ENCODE measurements at regions of chr12 and their contacts with region 1.

Region 1: DNA sequence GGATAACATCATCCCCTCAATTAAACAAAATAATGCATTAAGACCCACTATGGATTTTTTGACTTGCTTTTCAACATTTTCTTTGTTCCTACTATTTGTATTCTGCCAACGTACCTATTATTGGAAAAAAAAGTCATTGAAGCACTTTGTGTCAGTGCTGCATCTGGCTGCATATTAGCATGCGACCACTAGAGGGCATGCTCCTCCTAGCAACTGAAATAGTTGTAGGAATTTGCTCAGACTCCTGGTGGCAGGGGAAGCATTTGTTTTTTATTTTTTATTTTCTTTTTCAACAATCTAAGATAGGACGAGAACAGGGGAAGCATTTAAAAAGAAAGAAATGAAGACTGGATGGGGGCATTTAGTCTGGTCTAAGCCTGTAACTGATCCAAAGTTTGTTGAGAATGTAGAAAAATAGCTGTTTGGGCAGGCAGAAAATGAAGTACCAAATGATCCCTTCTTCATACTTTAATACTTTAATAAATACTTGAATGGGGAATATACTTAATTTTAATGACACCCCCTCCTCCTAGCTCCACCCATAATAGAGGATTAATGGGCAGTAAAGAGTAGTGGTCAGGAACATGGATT is 14.5 kb upstream of the CLEC4A start:
- DNase-seq: peak; percentile 75 to 78
- H3K4me3 ChIP-seq: no peak overlapping the region
- H3K27ac ChIP-seq: no peak overlapping the region
- H3K4me1 ChIP-seq: no peaks in the 10 kb centered on the region
- H3K27me3 ChIP-seq: no peaks in the 10 kb centered on the region
- CTCF ChIP-seq: peak; percentile 99

Region 2: GRCh38 chr12:8226355-8226754 is 117.5 kb after region 1 on chr12:
- CTCF ChIA-PET with region 1: no interaction called
- POLR2A ChIA-PET with region 1: no interaction called
- intact Hi-C with region 1: loop called (anchors 1 kb)
- DNase-seq: no peak
- H3K4me3 ChIP-seq: no peak overlapping the region
- H3K27ac ChIP-seq: no peak overlapping the region
- H3K4me1 ChIP-seq: peaks cover 4% of the 10 kb centered on the region; the same call in 1 of the 2 replicates
- H3K27me3 ChIP-seq: no peaks in the 10 kb centered on the region
- CTCF ChIP-seq: no peak